ENCODE measurements at regions of chr1 and their contacts with region 1.

Region 1: DNA sequence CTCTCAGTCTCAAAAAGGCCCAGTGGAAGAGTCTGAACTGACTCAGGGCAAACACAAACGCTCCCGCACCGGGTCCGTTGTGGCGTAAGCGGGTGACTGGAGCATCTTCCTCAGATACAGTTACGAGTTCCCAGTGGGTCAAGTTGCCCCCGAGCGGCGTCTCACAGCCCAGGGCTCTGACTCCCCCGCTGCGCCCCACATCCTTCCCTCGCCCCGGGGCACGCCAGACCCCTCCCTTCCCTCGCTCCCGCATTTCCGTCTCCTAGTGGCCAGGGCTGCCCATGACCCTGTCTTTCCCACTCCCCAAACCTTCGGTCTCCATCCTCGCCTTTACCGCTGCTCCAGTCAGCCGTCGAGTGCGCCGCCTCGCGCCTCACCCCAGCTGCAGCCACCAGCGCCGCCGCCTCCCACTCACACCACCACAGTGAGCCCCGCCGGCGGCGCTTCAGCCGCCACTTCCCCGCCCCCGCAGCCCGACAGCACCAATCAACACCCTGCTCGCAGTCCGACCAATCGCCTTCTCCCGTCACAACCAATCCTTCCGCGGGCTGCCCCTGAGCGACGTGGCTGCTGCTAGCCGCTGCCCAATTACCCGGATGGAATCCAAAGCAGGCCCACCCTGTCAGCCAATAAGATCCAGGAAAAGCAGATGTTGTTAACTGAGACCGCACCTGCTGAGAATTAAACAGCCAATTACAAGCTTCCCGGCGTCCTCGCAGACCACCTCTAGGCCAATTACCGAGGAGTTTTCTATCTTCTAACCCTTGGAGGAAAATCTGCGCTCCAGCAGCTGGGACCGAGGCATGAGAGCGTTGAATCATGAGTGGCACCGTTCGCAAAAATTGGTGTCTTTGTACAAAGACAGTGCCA is at the start of gene TDRKH:
- DNase-seq: peak; percentile 92 to 99 (median 98)
- ATAC-seq: peak; percentile 95 to 96
- H3K4me3 Mint-ChIP-seq: peak within 1 kb of the TSS; percentile 94 to 100 (median 98)
- H3K27ac Mint-ChIP-seq: peak within 1 kb of the TSS; percentile 83 to 98 (median 93)
- H3K4me1 Mint-ChIP-seq: peaks cover 8 to 36% (median 31%) of the 10 kb centered on the region in 4 donors
- H3K27me3 Mint-ChIP-seq: peaks cover 0 to 2% (median 0%) of the 10 kb centered on the region in 5 donors
- polyA plus RNA-seq, gene TDRKH: 14.7 to 15.9 (median 14.9) TPM

Region 2: GRCh38 chr1:151762941-151763921 is 27.1 kb before region 1 on chr1 and contains the start of gene MRPL9:
- POLR2A ChIA-PET with region 1: interaction called, 23 read pairs
- DNase-seq: peak; percentile 68 to 89 (median 82)
- ATAC-seq: peak; percentile 98 to 99
- H3K4me3 Mint-ChIP-seq: peak within 1 kb of the TSS; percentile 89 to 97 (median 94)
- H3K27ac Mint-ChIP-seq: peak within 1 kb of the TSS; percentile 94 to 99 (median 96)
- H3K4me1 Mint-ChIP-seq: peaks cover 7 to 24% (median 21%) of the 10 kb centered on the region in 4 donors
- H3K27me3 Mint-ChIP-seq: no peaks in the 10 kb centered on the region
- polyA plus RNA-seq, gene MRPL9: 125 to 137 (median 127) TPM

Region 3: GRCh38 chr1:152001391-152002249 is 211.3 kb after region 1 on chr1:
- POLR2A ChIA-PET with region 1: no interaction called
- DNase-seq: peak; percentile 56 to 86 (median 70)
- ATAC-seq: peak; percentile 77 to 81
- H3K4me3 Mint-ChIP-seq: no peak overlapping the region
- H3K27ac Mint-ChIP-seq: no peak overlapping the region
- H3K4me1 Mint-ChIP-seq: peaks cover 0 to 5% (median under 1%) of the 10 kb centered on the region in 4 donors
- H3K27me3 Mint-ChIP-seq: peaks cover 2 to 18% (median 7%) of the 10 kb centered on the region in 5 donors